ENCODE measurements at regions of chr2 and their contacts with region 1.

Region 1: GRCh38 chr2:222024932-222025880 is 273.6 kb downstream of the PAX3 start:
- DNase-seq: no peak
- ATAC-seq: peak; percentile 52; the same call in 1 of the 3 replicates
- H3K4me3 ChIP-seq: no peak overlapping the region; the same call in 1 of the 2 replicates
- H3K27ac ChIP-seq: no peak overlapping the region
- H3K4me1 ChIP-seq: no peaks in the 10 kb centered on the region
- H3K27me3 ChIP-seq: no peaks in the 10 kb centered on the region; a peak in 1 of 4 replicates
- CTCF ChIP-seq: peak; percentile 53 to 59 (median 56)
- EP300 ChIP-seq: no peak
- POLR2A ChIP-seq: no peak
- RAD21 ChIP-seq: peak; percentile 49

Region 2: DNA sequence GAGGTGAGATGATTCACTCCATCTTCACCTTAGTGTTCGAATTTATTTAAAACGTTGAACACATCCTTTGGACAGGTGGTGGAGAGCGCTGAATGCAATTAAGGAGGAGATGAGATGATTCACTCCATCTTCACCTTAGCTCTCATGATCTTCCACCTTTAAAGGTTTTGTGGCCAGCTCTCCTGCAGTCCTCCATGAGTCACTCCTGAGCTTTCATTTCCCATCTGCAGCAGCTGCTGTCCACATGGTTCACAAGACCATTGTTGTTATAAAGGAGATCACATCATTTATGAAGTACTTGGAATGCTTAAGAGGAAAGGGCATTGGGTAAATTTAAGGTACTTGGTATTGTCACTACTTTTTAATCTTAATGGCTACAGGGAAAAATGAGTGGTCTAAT is 24.9 kb before region 1 on chr2:
- CTCF ChIA-PET with region 1: interaction called, 11 read pairs
- POLR2A ChIA-PET with region 1: no interaction called
- RAD21 ChIA-PET with region 1: no interaction called
- SMC1A ChIA-PET with region 1: no interaction called
- in situ Hi-C with region 1: no loop called
- intact Hi-C with region 1: no loop called
- DNase-seq: no peak
- ATAC-seq: no peak
- H3K4me3 ChIP-seq: no peak overlapping the region
- H3K27ac ChIP-seq: no peak overlapping the region
- H3K4me1 ChIP-seq: no peaks in the 10 kb centered on the region
- H3K27me3 ChIP-seq: no peaks in the 10 kb centered on the region
- CTCF ChIP-seq: no peak
- EP300 ChIP-seq: no peak
- POLR2A ChIP-seq: no peak
- RAD21 ChIP-seq: no peak

Region 3: DNA sequence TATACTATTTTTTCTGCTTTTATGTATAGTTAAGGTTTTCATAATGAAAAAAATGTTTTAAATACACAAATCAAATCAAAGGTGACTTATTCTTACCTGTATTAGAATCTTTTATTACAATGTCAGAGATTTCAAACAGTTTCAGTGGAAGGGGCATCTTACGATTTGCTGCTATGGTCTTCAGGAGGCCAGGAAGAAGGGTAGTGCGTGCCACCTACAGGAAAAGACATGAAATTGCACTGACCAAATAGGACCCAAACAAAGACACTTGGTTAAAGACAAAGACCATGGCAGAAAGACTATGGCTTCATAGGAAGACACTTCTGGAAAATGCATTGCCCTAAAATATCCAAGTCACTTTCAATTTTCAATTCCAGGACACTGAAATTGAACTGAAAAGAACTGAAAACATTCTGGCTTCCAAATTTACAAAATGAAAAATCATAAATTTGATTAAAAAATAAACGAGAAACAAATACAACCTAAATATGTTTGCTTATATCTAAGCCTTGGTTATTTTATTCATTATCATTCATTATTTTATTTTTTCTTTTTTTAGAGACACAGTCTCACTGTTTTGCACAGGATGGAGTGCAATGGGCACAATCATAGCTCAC is 588.6 kb after region 1 on chr2:
- CTCF ChIA-PET with region 1: interaction called, 10 read pairs
- POLR2A ChIA-PET with region 1: no interaction called
- RAD21 ChIA-PET with region 1: no interaction called
- SMC1A ChIA-PET with region 1: no interaction called
- in situ Hi-C with region 1: no loop called
- intact Hi-C with region 1: no loop called
- DNase-seq: no peak
- ATAC-seq: peak; percentile 93
- H3K4me3 ChIP-seq: no peak overlapping the region
- H3K27ac ChIP-seq: no peak overlapping the region
- H3K4me1 ChIP-seq: no peaks in the 10 kb centered on the region
- H3K27me3 ChIP-seq: no peaks in the 10 kb centered on the region
- CTCF ChIP-seq: peak; percentile 73 to 82 (median 79)
- EP300 ChIP-seq: no peak
- POLR2A ChIP-seq: no peak
- RAD21 ChIP-seq: peak; percentile 71